ENCODE measurements at regions of chr20 and their contacts with region 1.

Region 1: GRCh38 chr20:40997116-40997515 is 31.5 kb upstream of the TOP1 start:
- DNase-seq: no peak
- H3K4me3 ChIP-seq: no peak overlapping the region
- H3K27ac ChIP-seq: no peak overlapping the region
- H3K4me1 ChIP-seq: peaks cover under 1% of the 10 kb centered on the region
- H3K27me3 ChIP-seq: no peaks in the 10 kb centered on the region
- CTCF ChIP-seq: no peak

Region 2: GRCh38 chr20:41038878-41039404 is 41.8 kb after region 1 on chr20:
- CTCF ChIA-PET with region 1: no interaction called
- dilution Hi-C with region 1: loop called (anchors 5 kb)
- in situ Hi-C with region 1: no loop called
- intact Hi-C with region 1: no loop called
- DNase-seq: no peak
- H3K4me3 ChIP-seq: no peak overlapping the region
- H3K27ac ChIP-seq: no peak overlapping the region
- H3K4me1 ChIP-seq: no peaks in the 10 kb centered on the region
- H3K27me3 ChIP-seq: no peaks in the 10 kb centered on the region
- CTCF ChIP-seq: no peak

Region 3: GRCh38 chr20:41218466-41218865 is 221.3 kb after region 1 on chr20:
- CTCF ChIA-PET with region 1: no interaction called
- dilution Hi-C with region 1: no loop called
- in situ Hi-C with region 1: no loop called
- intact Hi-C with region 1: no loop called
- DNase-seq: peak; percentile 12
- H3K4me3 ChIP-seq: no peak overlapping the region
- H3K27ac ChIP-seq: no peak overlapping the region
- H3K4me1 ChIP-seq: peaks cover 8% of the 10 kb centered on the region
- H3K27me3 ChIP-seq: no peaks in the 10 kb centered on the region
- CTCF ChIP-seq: no peak

Measured in mammary epithelial cell (primary cell).